B cell (primary cell): ENCODE measurements at regions of chr3 and their contacts with region 1.

Region 1: GRCh38 chr3:113495035-113495434 is 19.9 kb downstream of the SPICE1 start:
- DNase-seq: peak; percentile 60
- ATAC-seq: peak; percentile 47
- H3K4me3 ChIP-seq: no peak overlapping the region
- H3K4me3 Mint-ChIP-seq: no peak overlapping the region
- H3K27ac ChIP-seq: no peak overlapping the region
- H3K27ac Mint-ChIP-seq: no peak overlapping the region
- H3K4me1 ChIP-seq: no peaks in the 10 kb centered on the region
- H3K4me1 Mint-ChIP-seq: no peaks in the 10 kb centered on the region
- H3K27me3 ChIP-seq: no peaks in the 10 kb centered on the region
- H3K27me3 Mint-ChIP-seq: no peaks in the 10 kb centered on the region
- CTCF ChIP-seq: peak; percentile 57

Region 2: DNA sequence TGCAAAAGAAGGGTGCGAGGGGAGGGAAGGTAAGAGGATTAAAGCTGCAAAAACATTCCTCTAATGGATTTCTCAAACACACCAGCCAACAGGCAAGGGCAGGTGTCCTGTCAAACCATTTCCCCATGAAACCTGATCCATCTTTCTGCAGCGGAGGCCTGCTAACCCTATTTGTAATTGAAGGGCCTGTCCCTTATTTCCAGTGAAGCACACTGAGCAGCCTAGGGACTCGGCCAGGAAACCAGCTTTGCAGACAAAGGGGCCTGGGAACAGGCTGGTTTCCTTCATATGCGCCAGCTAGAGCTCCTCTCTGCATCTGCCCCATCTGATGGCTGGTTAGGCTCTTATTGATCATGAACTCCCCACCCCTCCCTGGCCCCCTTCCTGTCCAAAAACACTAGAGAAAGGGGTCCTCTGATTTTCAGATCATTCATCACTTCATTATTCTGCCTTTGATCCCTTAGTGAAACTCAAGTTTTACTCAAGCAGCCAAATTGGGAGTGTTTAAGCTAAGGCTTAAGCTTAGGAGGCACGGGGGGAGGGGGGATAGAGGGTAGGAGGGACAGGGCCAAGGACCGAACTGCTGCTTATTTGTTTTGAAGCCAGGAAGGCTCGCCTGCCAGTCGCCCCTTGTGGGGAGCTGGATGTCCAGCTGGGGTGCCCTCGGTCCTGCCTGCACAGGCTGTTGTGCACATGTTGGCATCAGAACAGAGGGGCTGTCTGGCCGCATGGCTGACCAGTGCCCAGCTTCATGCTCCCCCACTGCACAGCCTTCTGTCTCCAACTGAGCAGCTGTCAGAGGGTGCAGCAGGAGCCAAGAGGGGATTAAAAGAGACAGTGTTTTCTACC is 230.5 kb before region 1 on chr3:
- CTCF ChIA-PET with region 1: no interaction called
- POLR2A ChIA-PET with region 1: no interaction called
- intact Hi-C with region 1: no loop called
- DNase-seq: no peak
- ATAC-seq: no peak
- H3K4me3 ChIP-seq: no peak overlapping the region
- H3K4me3 Mint-ChIP-seq: no peak overlapping the region
- H3K27ac ChIP-seq: no peak overlapping the region
- H3K27ac Mint-ChIP-seq: no peak overlapping the region
- H3K4me1 ChIP-seq: no peaks in the 10 kb centered on the region
- H3K4me1 Mint-ChIP-seq: no peaks in the 10 kb centered on the region
- H3K27me3 ChIP-seq: no peaks in the 10 kb centered on the region
- H3K27me3 Mint-ChIP-seq: peaks cover 19% of the 10 kb centered on the region
- CTCF ChIP-seq: no peak

Region 3: DNA sequence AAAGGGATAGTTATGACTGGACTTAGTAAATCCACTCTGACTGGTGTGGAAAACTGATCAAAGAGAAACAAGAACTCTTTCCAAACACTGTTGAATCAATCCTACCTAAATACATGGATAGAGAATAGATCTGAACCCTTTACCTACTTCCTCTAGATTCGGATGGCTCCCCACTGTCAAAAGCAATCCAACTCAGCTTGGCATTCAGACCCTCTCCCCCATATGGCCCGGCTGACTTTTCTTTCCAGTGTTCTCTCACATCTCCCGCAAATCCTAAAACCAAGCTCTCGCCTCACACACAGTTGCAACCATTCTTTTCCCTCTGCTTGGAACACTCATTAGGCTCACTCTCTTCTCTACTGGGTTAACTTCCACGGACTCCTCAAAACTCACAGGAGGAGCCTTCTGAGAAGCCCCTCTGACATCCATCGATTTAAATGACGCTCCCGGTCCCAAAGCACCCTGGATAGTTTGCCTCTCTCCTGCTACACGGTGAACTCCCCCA is 19.3 kb after region 1 on chr3:
- CTCF ChIA-PET with region 1: interaction called, 21 read pairs
- POLR2A ChIA-PET with region 1: no interaction called
- intact Hi-C with region 1: loop called (anchors 1 kb)
- DNase-seq: no peak
- ATAC-seq: no peak
- H3K4me3 ChIP-seq: peak overlapping the region; percentile 46 to 98 (median 92)
- H3K4me3 Mint-ChIP-seq: no peak overlapping the region
- H3K27ac ChIP-seq: peak overlapping the region; percentile 77 to 91
- H3K27ac Mint-ChIP-seq: no peak overlapping the region
- H3K4me1 ChIP-seq: peaks cover 12 to 17% of the 10 kb centered on the region in 2 donors
- H3K4me1 Mint-ChIP-seq: peaks cover 14% of the 10 kb centered on the region
- H3K27me3 ChIP-seq: peaks cover 0 to 14% (median 4%) of the 10 kb centered on the region in 4 experiments
- H3K27me3 Mint-ChIP-seq: peaks cover 23% of the 10 kb centered on the region
- CTCF ChIP-seq: no peak

Region 4: GRCh38 chr3:113552851-113553250 is 57.8 kb after region 1 on chr3:
- CTCF ChIA-PET with region 1: interaction called, 124 read pairs
- POLR2A ChIA-PET with region 1: interaction called, 8 read pairs
- intact Hi-C with region 1: loop called (anchors 1 kb)
- DNase-seq: peak; percentile 68
- ATAC-seq: peak; percentile 62
- H3K4me3 ChIP-seq: no peak overlapping the region
- H3K4me3 Mint-ChIP-seq: no peak overlapping the region
- H3K27ac ChIP-seq: peak overlapping the region in 1 of 2 donors; percentile 42
- H3K27ac Mint-ChIP-seq: peak overlapping the region; percentile 22
- H3K4me1 ChIP-seq: peaks cover 4 to 6% of the 10 kb centered on the region in 2 donors
- H3K4me1 Mint-ChIP-seq: peaks cover 21% of the 10 kb centered on the region
- H3K27me3 ChIP-seq: no peaks in the 10 kb centered on the region
- H3K27me3 Mint-ChIP-seq: no peaks in the 10 kb centered on the region
- CTCF ChIP-seq: peak; percentile 64